ENCODE measurements at regions of chr1 and their contacts with region 1.

Region 1: GRCh38 chr1:24541711-24542346 is 14.1 kb upstream of the NCMAP start:
- DNase-seq: peak; percentile 58
- H3K4me3 Mint-ChIP-seq: no peak overlapping the region
- H3K27ac Mint-ChIP-seq: peak overlapping the region; percentile 93
- H3K4me1 Mint-ChIP-seq: peaks cover 65% of the 10 kb centered on the region
- H3K27me3 Mint-ChIP-seq: no peaks in the 10 kb centered on the region

Region 2: GRCh38 chr1:24481101-24481500 is 60.7 kb before region 1 on chr1:
- CTCF ChIA-PET with region 1: interaction called, 4 read pairs
- POLR2A ChIA-PET with region 1: interaction called, 5 read pairs
- intact Hi-C with region 1: loop called (anchors 2 kb)
- DNase-seq: peak; percentile 83
- H3K4me3 Mint-ChIP-seq: peak overlapping the region; percentile 58
- H3K27ac Mint-ChIP-seq: peak overlapping the region; percentile 97
- H3K4me1 Mint-ChIP-seq: peaks cover 60% of the 10 kb centered on the region
- H3K27me3 Mint-ChIP-seq: no peaks in the 10 kb centered on the region

Region 3: GRCh38 chr1:24502709-24503058 is 39.1 kb before region 1 on chr1 and contains the start of gene RCAN3:
- CTCF ChIA-PET with region 1: interaction called, 4 read pairs
- POLR2A ChIA-PET with region 1: interaction called, 23 read pairs
- intact Hi-C with region 1: loop called (anchors 1 kb)
- DNase-seq: peak; percentile 92
- H3K4me3 Mint-ChIP-seq: peak within 1 kb of the TSS; percentile 98
- H3K27ac Mint-ChIP-seq: peak within 1 kb of the TSS; percentile 99
- H3K4me1 Mint-ChIP-seq: peaks cover 61% of the 10 kb centered on the region
- H3K27me3 Mint-ChIP-seq: no peaks in the 10 kb centered on the region
- total RNA-seq, gene RCAN3: 71.3 to 78.8 TPM

Region 4: GRCh38 chr1:24744911-24745710 is 203.3 kb after region 1 on chr1 and contains the start of gene CLIC4:
- CTCF ChIA-PET with region 1: no interaction called
- POLR2A ChIA-PET with region 1: no interaction called
- intact Hi-C with region 1: loop called (anchors 5 kb)
- DNase-seq: peak; percentile 100
- H3K4me3 Mint-ChIP-seq: peak within 1 kb of the TSS; percentile 76
- H3K27ac Mint-ChIP-seq: peak within 1 kb of the TSS; percentile 58
- H3K4me1 Mint-ChIP-seq: peaks cover 34% of the 10 kb centered on the region
- H3K27me3 Mint-ChIP-seq: no peaks in the 10 kb centered on the region
- total RNA-seq, gene CLIC4: 25.5 to 26.3 TPM